ENCODE measurements at regions of chr18 and their contacts with region 1.

Region 1: GRCh38 chr18:74147779-74148542 is at the starts of genes FBXO15 and TIMM21:
- DNase-seq: peak; percentile 98
- ATAC-seq: peak; percentile 91
- H3K4me3 Mint-ChIP-seq: peak within 1 kb of the TSS; percentile 97
- H3K27ac Mint-ChIP-seq: peak within 1 kb of the TSS; percentile 98
- H3K4me1 Mint-ChIP-seq: peaks cover 36% of the 10 kb centered on the region
- H3K27me3 Mint-ChIP-seq: no peaks in the 10 kb centered on the region
- total RNA-seq, gene FBXO15: 1.4 to 1.6 TPM
- total RNA-seq, gene TIMM21: 36.9 to 52.8 TPM

Region 2: DNA sequence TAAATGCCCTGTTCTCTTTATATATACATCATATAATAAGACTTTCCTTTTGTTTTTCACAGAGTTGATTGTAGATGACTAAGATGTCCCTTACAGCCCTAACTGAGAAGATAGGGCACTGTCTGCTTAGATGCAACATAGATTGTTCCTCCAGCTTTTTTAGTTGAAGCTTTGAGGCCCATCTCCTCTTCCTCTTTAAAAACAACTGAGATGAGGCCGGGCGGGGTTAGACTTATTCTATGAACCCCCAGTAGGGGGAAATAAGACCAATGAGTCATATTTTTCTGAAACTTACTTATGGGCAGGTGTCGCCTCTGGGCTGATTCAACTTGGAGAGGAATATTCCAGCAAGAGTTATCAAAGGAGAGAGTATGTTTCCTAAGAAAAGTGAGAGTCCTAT is 84.9 kb before region 1 on chr18:
- CTCF ChIA-PET with region 1: no interaction called
- POLR2A ChIA-PET with region 1: no interaction called
- intact Hi-C with region 1: loop called in 1 of 2 experiments (anchors 2 kb)
- DNase-seq: peak; percentile 65
- ATAC-seq: peak; percentile 55
- H3K4me3 Mint-ChIP-seq: no peak overlapping the region
- H3K27ac Mint-ChIP-seq: peak overlapping the region; percentile 75
- H3K4me1 Mint-ChIP-seq: peaks cover 34% of the 10 kb centered on the region
- H3K27me3 Mint-ChIP-seq: no peaks in the 10 kb centered on the region

Region 3: DNA sequence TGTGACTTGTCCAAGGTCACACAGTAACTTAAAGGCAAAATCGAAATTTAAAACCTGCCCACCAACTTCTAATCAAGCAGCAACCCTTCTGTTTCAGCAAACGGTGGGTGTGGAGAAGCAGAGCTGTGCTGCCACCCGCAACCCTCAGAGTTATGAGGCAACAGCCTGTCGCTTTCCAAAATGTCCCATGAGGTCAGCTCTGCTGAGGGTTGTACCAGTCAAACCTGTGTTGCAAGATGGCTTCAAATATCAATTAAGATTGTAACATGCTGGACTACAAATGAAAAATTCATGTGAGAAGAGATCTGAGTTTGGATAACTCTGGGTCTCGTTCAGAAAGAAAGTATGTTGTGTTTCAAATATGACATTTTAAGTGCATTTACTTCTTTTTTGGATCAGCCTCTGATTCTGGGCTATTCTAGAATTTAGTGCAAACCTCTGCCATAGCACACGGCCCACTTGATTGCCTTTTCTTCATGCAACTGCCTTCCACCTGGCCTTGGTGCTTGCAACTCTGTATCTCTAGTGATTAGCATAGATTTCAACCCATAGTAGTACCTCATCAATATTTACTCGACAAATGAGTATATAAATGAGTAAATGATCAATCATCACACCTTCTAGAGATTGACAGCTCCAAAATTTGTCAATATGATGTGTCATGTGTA is 69.6 kb after region 1 on chr18:
- CTCF ChIA-PET with region 1: no interaction called
- POLR2A ChIA-PET with region 1: no interaction called
- intact Hi-C with region 1: no loop called
- DNase-seq: no peak
- ATAC-seq: no peak
- H3K4me3 Mint-ChIP-seq: no peak overlapping the region
- H3K27ac Mint-ChIP-seq: no peak overlapping the region
- H3K4me1 Mint-ChIP-seq: no peaks in the 10 kb centered on the region
- H3K27me3 Mint-ChIP-seq: peaks cover 6% of the 10 kb centered on the region

Region 4: DNA sequence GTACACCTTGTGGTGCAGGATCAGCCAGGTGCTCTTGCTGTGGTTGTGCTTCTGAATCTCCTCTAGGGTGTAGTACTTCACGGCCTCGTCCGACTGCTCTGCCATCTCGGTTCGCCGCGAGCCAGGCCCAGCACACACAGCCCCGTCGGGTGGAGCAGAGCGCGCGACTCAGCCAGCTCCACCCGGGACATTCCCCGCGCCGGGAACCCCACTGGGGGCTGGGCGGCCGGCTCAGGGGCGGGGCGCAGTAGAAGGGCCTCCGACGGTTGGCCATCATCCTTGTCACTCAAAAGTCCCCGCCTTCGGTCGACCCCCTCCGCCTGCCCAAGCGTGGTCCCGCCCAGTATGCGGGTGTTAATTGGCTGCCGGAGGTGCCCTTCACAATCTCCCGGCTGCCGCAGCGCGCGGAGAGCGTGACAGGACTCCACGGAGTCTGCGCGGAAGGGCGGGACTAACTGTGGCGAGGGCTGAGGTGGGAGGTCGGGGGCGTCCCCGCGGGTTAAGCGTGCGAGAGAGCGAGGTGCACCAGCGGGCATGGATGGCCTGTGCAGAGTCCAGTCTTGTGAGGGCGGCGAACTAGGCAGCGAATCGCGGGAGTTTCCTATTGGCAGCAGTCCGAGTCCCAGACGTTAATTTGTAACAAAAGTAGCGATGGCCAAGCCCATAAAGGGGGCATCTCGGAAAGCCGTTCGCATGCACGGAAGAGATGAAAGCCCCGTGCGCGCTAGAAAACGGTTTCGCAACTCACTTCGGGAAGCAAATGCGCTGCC is 144.0 kb after region 1 on chr18 and contains the start of gene CYB5A:
- CTCF ChIA-PET with region 1: no interaction called
- POLR2A ChIA-PET with region 1: no interaction called
- intact Hi-C with region 1: loop called (anchors 1 to 2 kb)
- DNase-seq: peak; percentile 98
- ATAC-seq: peak; percentile 99
- H3K4me3 Mint-ChIP-seq: peak within 1 kb of the TSS; percentile 86
- H3K27ac Mint-ChIP-seq: peak within 1 kb of the TSS; percentile 83
- H3K4me1 Mint-ChIP-seq: peaks cover 6% of the 10 kb centered on the region
- H3K27me3 Mint-ChIP-seq: no peaks in the 10 kb centered on the region
- total RNA-seq, gene CYB5A: 53.1 to 61.4 TPM

Measured in activated CD4-positive, alpha-beta T cell treated with anti-CD3 and anti-CD28 coated beads for 36 hours (primary cell).